Psoas muscle (tissue), 8 donors: ENCODE measurements at regions of chr3 and their contacts with region 1.

Region 1: DNA sequence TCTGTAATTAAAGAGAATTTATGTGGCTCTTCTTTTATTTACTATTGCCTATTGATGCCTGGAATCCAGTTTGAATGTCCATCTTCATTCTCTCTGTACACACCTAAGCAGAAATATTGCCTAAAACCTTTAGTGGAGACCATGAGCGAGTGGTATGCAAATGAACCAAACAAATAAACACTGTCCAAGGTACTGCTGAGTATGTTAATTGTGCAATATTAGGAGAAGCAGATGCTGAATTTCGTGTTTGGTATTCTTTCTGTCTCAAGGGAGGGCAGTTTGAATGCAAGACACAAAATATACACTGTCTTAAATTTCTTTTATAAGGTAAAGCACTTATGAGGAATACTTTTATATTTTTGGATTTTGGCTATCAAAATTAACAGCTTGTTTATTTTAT is 440.9 kb downstream of the RBMS3 start:
- DNase-seq: no peak
- ATAC-seq: no peak
- H3K4me3 ChIP-seq: no peak overlapping the region
- H3K27ac ChIP-seq: no peak overlapping the region
- H3K4me1 ChIP-seq: no peaks in the 10 kb centered on the region
- H3K27me3 ChIP-seq: no peaks in the 10 kb centered on the region
- CTCF ChIP-seq: no peak

Region 2: GRCh38 chr3:29708884-29709283 is 12.9 kb before region 1 on chr3:
- intact Hi-C with region 1: loop called in 1 of 2 experiments (anchors 1 kb)
- DNase-seq: no peak
- ATAC-seq: no peak
- H3K4me3 ChIP-seq: no peak overlapping the region
- H3K27ac ChIP-seq: no peak overlapping the region
- H3K4me1 ChIP-seq: peaks cover 15% of the 10 kb centered on the region
- H3K27me3 ChIP-seq: no peaks in the 10 kb centered on the region
- CTCF ChIP-seq: no peak

Region 3: DNA sequence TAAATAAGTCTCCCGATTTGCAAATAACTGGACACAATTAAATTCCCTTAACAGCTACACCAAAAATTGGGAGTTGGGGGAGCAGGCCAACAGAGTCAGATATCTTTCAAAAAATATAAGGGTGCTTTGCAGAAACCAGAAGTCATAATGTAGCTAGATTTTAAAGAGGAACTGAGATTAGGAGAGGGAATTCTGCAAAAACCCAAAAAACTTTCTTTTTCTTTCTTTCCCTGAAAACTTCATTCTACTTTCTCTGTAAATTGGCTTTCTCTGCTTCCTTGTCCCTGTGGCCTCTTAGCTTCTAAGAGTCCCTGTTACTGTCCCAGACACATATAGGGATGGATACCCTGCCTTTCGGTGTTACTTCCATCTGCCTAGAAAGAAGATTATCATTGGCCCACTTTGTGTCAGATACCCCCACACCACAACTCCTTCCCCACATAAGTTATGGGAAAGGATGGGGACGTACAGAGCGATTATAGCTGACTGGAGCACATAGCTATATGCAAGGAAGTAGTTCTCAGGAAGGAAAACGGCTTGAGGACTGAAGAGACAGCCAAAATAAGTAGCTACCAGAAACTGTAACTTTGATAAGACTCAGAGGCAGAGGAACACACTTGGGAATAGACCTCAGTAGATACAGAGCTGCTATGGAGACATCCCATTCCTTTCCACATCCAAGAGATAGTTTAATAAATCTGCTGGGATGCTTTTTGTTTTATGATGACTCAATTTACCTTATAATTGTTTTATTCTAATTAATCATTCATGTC is 755.5 kb after region 1 on chr3:
- intact Hi-C with region 1: no loop called
- DNase-seq: no peak
- ATAC-seq: no peak
- H3K4me3 ChIP-seq: no peak overlapping the region
- H3K27ac ChIP-seq: no peak overlapping the region
- H3K4me1 ChIP-seq: no peaks in the 10 kb centered on the region
- H3K27me3 ChIP-seq: no peaks in the 10 kb centered on the region
- CTCF ChIP-seq: no peak